WTC11 (cell line): ENCODE measurements at regions of chr1 and their contacts with region 1.

Region 1: DNA sequence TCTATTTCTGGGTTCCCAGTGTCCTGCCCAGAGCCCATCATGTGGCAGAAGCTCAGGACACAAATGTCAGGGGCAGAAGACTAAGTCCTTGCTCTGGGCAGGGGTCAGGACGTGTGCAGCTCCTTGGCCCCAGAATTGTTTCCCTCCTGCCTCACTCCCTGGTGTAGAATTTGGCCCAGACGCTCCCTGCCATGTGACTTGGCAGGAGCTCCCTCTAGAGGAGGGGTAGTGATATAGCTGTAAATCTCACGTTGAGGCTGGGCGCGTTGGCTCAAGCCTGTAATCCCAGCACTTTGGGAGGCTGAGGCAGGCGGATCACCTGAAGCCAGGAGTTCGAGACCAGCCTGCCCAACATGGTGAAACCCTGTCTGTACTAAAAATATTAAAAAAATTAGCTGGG is 91.2 kb downstream of the UBIAD1 start:
- DNase-seq: peak; percentile 39
- ATAC-seq: peak; percentile 55
- H3K4me3 Mint-ChIP-seq: no peak overlapping the region
- H3K27ac Mint-ChIP-seq: no peak overlapping the region
- H3K4me1 Mint-ChIP-seq: peaks cover 26% of the 10 kb centered on the region
- H3K27me3 Mint-ChIP-seq: peaks cover 19% of the 10 kb centered on the region
- CTCF ChIP-seq: peak; percentile 60

Region 2: DNA sequence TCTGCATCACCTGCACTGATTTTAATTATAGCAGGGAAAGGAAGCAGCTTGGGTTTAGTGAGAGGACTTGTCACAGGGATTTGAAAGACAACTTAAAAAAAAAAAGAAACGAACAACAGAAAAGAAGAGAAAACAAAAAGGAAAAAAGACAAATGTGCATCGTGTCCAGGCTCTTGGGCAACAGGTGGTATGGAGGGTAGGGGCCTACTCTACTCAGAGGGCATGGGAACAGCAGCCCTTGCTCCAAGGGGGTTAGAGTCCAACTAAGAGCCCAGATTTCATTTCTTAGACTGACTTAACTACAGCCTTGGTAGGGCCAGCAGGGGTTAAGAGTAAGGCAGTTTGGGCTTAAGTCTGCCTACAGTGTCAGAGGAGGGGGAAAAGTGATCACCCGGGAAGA is 249.2 kb before region 1 on chr1:
- CTCF ChIA-PET with region 1: no interaction called
- POLR2A ChIA-PET with region 1: no interaction called
- DNase-seq: no peak
- ATAC-seq: no peak
- H3K4me3 Mint-ChIP-seq: no peak overlapping the region
- H3K27ac Mint-ChIP-seq: no peak overlapping the region
- H3K4me1 Mint-ChIP-seq: no peaks in the 10 kb centered on the region
- H3K27me3 Mint-ChIP-seq: no peaks in the 10 kb centered on the region
- CTCF ChIP-seq: no peak

Region 3: GRCh38 chr1:11188381-11188780 is 175.8 kb before region 1 on chr1:
- CTCF ChIA-PET with region 1: no interaction called
- POLR2A ChIA-PET with region 1: no interaction called
- DNase-seq: no peak
- ATAC-seq: no peak
- H3K4me3 Mint-ChIP-seq: no peak overlapping the region
- H3K27ac Mint-ChIP-seq: no peak overlapping the region
- H3K4me1 Mint-ChIP-seq: no peaks in the 10 kb centered on the region
- H3K27me3 Mint-ChIP-seq: no peaks in the 10 kb centered on the region
- CTCF ChIP-seq: no peak

Region 4: DNA sequence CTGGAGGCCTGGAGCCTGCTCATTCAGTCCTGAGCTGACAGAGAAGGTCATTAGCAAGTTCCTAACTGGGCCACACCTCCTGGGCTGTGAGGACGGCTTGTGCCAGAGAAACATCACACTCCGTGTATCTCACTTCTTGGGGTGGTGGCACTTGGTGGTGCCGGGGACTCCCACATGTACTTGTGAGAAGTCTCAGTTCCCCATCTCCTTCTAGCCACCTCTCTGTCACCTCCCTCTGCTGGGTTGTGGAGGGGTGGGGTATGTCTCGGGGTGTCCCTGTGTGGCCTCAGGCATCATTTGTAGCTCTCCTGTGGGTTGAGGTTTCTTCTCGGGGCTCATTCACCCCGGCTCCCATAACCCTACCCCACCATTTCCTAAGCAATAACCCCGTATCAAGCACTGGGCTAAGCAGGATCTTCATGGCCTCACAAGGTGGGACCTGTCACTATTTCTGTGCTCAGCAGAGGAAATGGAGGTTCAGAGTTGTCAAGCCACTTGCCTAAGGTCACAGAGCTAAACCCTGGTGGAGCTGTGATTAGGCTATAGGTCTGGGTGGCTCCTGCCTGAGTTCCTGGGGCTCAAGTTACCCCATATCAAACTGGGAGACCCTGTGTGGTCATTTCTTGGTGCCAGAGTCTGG is 28.6 kb before region 1 on chr1:
- CTCF ChIA-PET with region 1: interaction called, 13 read pairs
- POLR2A ChIA-PET with region 1: no interaction called
- DNase-seq: no peak
- ATAC-seq: no peak
- H3K4me3 Mint-ChIP-seq: no peak overlapping the region
- H3K27ac Mint-ChIP-seq: 0 out of 2 replicates have a peak overlapping the region, but pooled peaks have one; percentile 60
- H3K4me1 Mint-ChIP-seq: peaks cover 41% of the 10 kb centered on the region
- H3K27me3 Mint-ChIP-seq: peaks cover 5% of the 10 kb centered on the region; the same call in 1 of the 2 replicates
- CTCF ChIP-seq: no peak

Region 5: DNA sequence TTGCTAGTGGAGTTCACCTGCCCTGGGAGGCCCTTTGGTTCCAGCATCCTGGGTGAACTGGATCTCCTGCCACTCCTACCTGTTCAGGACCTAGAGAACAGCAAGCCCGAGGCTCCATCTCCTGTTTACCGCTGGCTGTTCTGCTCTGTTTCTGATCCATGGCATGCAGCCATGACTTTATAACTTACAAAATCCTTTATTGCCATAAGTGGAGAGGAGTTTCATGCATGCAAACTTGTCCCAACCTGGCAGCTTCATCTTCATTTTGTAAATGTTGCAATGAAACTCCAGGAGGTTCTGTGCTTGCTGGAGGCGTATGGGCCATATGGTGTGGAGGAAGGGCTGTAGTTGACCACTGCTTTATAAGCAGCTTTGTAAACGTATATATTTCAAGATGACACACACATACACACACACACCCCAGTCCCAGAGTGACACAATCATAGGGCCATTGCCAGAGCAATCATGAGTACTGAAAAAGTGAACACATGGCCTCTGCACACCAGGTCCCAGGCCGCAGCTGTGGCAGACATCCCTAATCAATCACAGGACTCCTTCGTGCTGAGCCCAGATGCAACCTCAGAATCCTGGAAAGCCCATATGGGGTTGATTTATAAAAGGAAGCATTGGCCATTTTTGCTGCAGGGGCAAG is 22.1 kb before region 1 on chr1:
- CTCF ChIA-PET with region 1: interaction called, 15 read pairs
- POLR2A ChIA-PET with region 1: no interaction called
- DNase-seq: no peak
- ATAC-seq: no peak
- H3K4me3 Mint-ChIP-seq: no peak overlapping the region
- H3K27ac Mint-ChIP-seq: no peak overlapping the region
- H3K4me1 Mint-ChIP-seq: peaks cover 71% of the 10 kb centered on the region
- H3K27me3 Mint-ChIP-seq: peaks cover 5% of the 10 kb centered on the region; the same call in 1 of the 2 replicates
- CTCF ChIP-seq: no peak

Region 6: GRCh38 chr1:11413986-11414391 is 49.8 kb after region 1 on chr1:
- CTCF ChIA-PET with region 1: interaction called, 13 read pairs
- POLR2A ChIA-PET with region 1: no interaction called
- DNase-seq: peak; percentile 28
- ATAC-seq: peak; percentile 38
- H3K4me3 Mint-ChIP-seq: no peak overlapping the region
- H3K27ac Mint-ChIP-seq: no peak overlapping the region; the same call in 1 of the 2 replicates
- H3K4me1 Mint-ChIP-seq: peaks cover 33% of the 10 kb centered on the region
- H3K27me3 Mint-ChIP-seq: peaks cover 5% of the 10 kb centered on the region
- CTCF ChIP-seq: no peak